ENCODE measurements at regions of chr2 and their contacts with region 1.

Region 1: GRCh38 chr2:152627351-152627957 is 89.8 kb downstream of the PRPF40A start:
- DNase-seq: peak; percentile 33
- ATAC-seq: no peak
- H3K4me3 ChIP-seq: no peak overlapping the region
- H3K4me3 Mint-ChIP-seq: no peak overlapping the region
- H3K27ac ChIP-seq: no peak overlapping the region
- H3K27ac Mint-ChIP-seq: no peak overlapping the region
- H3K4me1 ChIP-seq: no peaks in the 10 kb centered on the region
- H3K4me1 Mint-ChIP-seq: no peaks in the 10 kb centered on the region
- H3K27me3 ChIP-seq: no peaks in the 10 kb centered on the region
- H3K27me3 Mint-ChIP-seq: no peaks in the 10 kb centered on the region
- CTCF ChIP-seq: peak; percentile 71

Region 2: GRCh38 chr2:152189622-152190495 is 437.6 kb before region 1 on chr2:
- CTCF ChIA-PET with region 1: interaction called, 9 read pairs
- POLR2A ChIA-PET with region 1: no interaction called
- intact Hi-C with region 1: loop called (anchors 1 kb)
- DNase-seq: peak; percentile 47
- ATAC-seq: peak; percentile 60
- H3K4me3 ChIP-seq: no peak overlapping the region
- H3K4me3 Mint-ChIP-seq: no peak overlapping the region
- H3K27ac ChIP-seq: no peak overlapping the region
- H3K27ac Mint-ChIP-seq: no peak overlapping the region
- H3K4me1 ChIP-seq: no peaks in the 10 kb centered on the region
- H3K4me1 Mint-ChIP-seq: no peaks in the 10 kb centered on the region
- H3K27me3 ChIP-seq: peaks cover 0 to 9% (median 3%) of the 10 kb centered on the region in 4 experiments
- H3K27me3 Mint-ChIP-seq: peaks cover 33% of the 10 kb centered on the region
- CTCF ChIP-seq: peak; percentile 75